ENCODE measurements at regions of chr13 and their contacts with region 1.

Region 1: GRCh38 chr13:45417790-45418534 is at the start of gene SLC25A30:
- DNase-seq: peak; percentile 91 to 95 (median 94)
- H3K4me3 ChIP-seq: peak within 1 kb of the TSS; percentile 79
- H3K27ac ChIP-seq: peak within 1 kb of the TSS; percentile 4 to 76
- H3K4me1 ChIP-seq: peaks cover 8% of the 10 kb centered on the region
- H3K27me3 ChIP-seq: no peaks in the 10 kb centered on the region
- CTCF ChIP-seq: no peak
- EP300 ChIP-seq: no peak
- POLR2A ChIP-seq: peak; percentile 44
- total RNA-seq, gene SLC25A30: 10.7 to 33.4 (median 22.8) TPM

Region 2: GRCh38 chr13:45396533-45397095 is 21.3 kb before region 1 on chr13:
- intact Hi-C with region 1: no loop called
- DNase-seq: no peak
- H3K4me3 ChIP-seq: no peak overlapping the region
- H3K27ac ChIP-seq: no peak overlapping the region
- H3K4me1 ChIP-seq: no peaks in the 10 kb centered on the region
- H3K27me3 ChIP-seq: no peaks in the 10 kb centered on the region
- CTCF ChIP-seq: no peak
- EP300 ChIP-seq: no peak
- POLR2A ChIP-seq: no peak

Region 3: GRCh38 chr13:45464687-45465453 is 46.9 kb after region 1 on chr13 and contains the start of gene COG3:
- intact Hi-C with region 1: loop called in 1 of 4 experiments (anchors 10 kb)
- DNase-seq: peak; percentile 92 to 96 (median 94)
- H3K4me3 ChIP-seq: peak within 1 kb of the TSS; percentile 98
- H3K27ac ChIP-seq: peak within 1 kb of the TSS in 1 of 2 donors; percentile 78
- H3K4me1 ChIP-seq: peaks cover 14% of the 10 kb centered on the region
- H3K27me3 ChIP-seq: no peaks in the 10 kb centered on the region
- CTCF ChIP-seq: peak in 1 of 3 donors; percentile 32
- EP300 ChIP-seq: no peak
- POLR2A ChIP-seq: peak; percentile 60
- total RNA-seq, gene COG3: 23.9 to 37.3 (median 29.4) TPM

Measured in ovary (tissue), 10 donors.